Activated B cell treated with CpG ODN at 0.5 μM for 24 hours (primary cell): ENCODE measurements at regions of chr7 and their contacts with region 1.

Region 1: GRCh38 chr7:128739048-128739962 is at the start of gene CALU:
- DNase-seq: peak; percentile 89
- ATAC-seq: peak; percentile 96
- H3K4me3 Mint-ChIP-seq: peak within 1 kb of the TSS; percentile 97
- H3K27ac Mint-ChIP-seq: peak within 1 kb of the TSS; percentile 88
- H3K4me1 Mint-ChIP-seq: peaks cover 30% of the 10 kb centered on the region
- H3K27me3 Mint-ChIP-seq: no peaks in the 10 kb centered on the region
- CTCF ChIP-seq: no peak
- total RNA-seq, gene CALU: 14.7 and 15.4 TPM in 2 replicates

Region 2: GRCh38 chr7:128304212-128304611 is 435.1 kb before region 1 on chr7:
- CTCF ChIA-PET with region 1: no interaction called
- POLR2A ChIA-PET with region 1: no interaction called
- intact Hi-C with region 1: no loop called
- DNase-seq: no peak
- ATAC-seq: no peak
- H3K4me3 Mint-ChIP-seq: no peak overlapping the region
- H3K27ac Mint-ChIP-seq: no peak overlapping the region
- H3K4me1 Mint-ChIP-seq: no peaks in the 10 kb centered on the region
- H3K27me3 Mint-ChIP-seq: no peaks in the 10 kb centered on the region
- CTCF ChIP-seq: no peak

Region 3: GRCh38 chr7:128343554-128344430 is 395.5 kb before region 1 on chr7 and contains the start of gene RBM28:
- CTCF ChIA-PET with region 1: no interaction called
- POLR2A ChIA-PET with region 1: no interaction called
- intact Hi-C with region 1: loop called (anchors 5 kb)
- DNase-seq: peak; percentile 80
- ATAC-seq: peak; percentile 95
- H3K4me3 Mint-ChIP-seq: peak within 1 kb of the TSS; percentile 97
- H3K27ac Mint-ChIP-seq: peak within 1 kb of the TSS; percentile 95
- H3K4me1 Mint-ChIP-seq: peaks cover 26% of the 10 kb centered on the region
- H3K27me3 Mint-ChIP-seq: no peaks in the 10 kb centered on the region
- CTCF ChIP-seq: no peak
- total RNA-seq, gene RBM28: 45.7 and 54.4 TPM in 2 replicates

Region 4: DNA sequence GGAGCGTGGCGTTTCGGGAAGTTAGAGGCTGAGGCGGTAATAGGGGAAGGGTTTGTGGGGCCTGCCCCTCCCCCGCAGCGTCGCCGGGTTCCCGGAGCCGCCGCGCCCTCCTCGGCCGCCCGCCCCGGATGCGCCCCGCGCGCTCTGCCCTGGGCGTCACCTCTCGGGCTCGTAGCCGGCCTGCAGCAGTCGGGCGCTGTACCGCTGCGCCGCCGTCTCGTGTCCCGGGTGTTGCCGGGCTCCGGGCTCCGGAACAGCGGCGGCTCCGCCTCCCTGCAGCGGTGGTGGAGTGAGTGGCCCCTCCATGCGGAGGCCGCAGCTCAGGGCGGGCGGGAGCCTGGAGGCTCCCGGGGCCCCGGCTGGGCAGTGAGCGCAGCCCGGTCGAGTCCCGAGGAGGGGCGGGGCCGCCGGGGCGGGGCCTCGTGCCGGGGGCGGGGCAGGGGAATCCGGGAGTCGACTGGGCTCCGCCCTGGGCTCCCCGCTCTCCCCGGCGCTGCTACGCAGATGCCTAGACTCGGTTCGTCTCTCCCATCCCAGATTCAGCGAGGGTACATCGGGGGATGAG is 329.6 kb before region 1 on chr7 and contains the start of gene IMPDH1:
- CTCF ChIA-PET with region 1: no interaction called
- POLR2A ChIA-PET with region 1: no interaction called
- intact Hi-C with region 1: loop called (anchors 10 kb)
- DNase-seq: peak; percentile 91
- ATAC-seq: peak; percentile 76
- H3K4me3 Mint-ChIP-seq: peak within 1 kb of the TSS; percentile 91
- H3K27ac Mint-ChIP-seq: peak within 1 kb of the TSS; percentile 72
- H3K4me1 Mint-ChIP-seq: peaks cover 40% of the 10 kb centered on the region
- H3K27me3 Mint-ChIP-seq: no peaks in the 10 kb centered on the region
- CTCF ChIP-seq: no peak
- total RNA-seq, gene IMPDH1: 42.3 and 45.8 TPM in 2 replicates

Region 5: GRCh38 chr7:128697302-128697905 is 41.9 kb before region 1 on chr7:
- CTCF ChIA-PET with region 1: no interaction called
- POLR2A ChIA-PET with region 1: no interaction called
- intact Hi-C with region 1: loop called (anchors 2 kb)
- DNase-seq: peak; percentile 48
- ATAC-seq: peak; percentile 82
- H3K4me3 Mint-ChIP-seq: peak overlapping the region; percentile 80
- H3K27ac Mint-ChIP-seq: peak overlapping the region; percentile 41
- H3K4me1 Mint-ChIP-seq: peaks cover 7% of the 10 kb centered on the region
- H3K27me3 Mint-ChIP-seq: peaks cover 51% of the 10 kb centered on the region
- CTCF ChIP-seq: no peak

Region 6: GRCh38 chr7:128791121-128791961 is 52.0 kb after region 1 on chr7:
- CTCF ChIA-PET with region 1: no interaction called
- POLR2A ChIA-PET with region 1: no interaction called
- intact Hi-C with region 1: loop called (anchors 1 kb)
- DNase-seq: peak; percentile 71
- ATAC-seq: peak; percentile 91
- H3K4me3 Mint-ChIP-seq: peak overlapping the region; percentile 87
- H3K27ac Mint-ChIP-seq: no peak overlapping the region
- H3K4me1 Mint-ChIP-seq: peaks cover 10% of the 10 kb centered on the region
- H3K27me3 Mint-ChIP-seq: no peaks in the 10 kb centered on the region
- CTCF ChIP-seq: no peak

Region 7: DNA sequence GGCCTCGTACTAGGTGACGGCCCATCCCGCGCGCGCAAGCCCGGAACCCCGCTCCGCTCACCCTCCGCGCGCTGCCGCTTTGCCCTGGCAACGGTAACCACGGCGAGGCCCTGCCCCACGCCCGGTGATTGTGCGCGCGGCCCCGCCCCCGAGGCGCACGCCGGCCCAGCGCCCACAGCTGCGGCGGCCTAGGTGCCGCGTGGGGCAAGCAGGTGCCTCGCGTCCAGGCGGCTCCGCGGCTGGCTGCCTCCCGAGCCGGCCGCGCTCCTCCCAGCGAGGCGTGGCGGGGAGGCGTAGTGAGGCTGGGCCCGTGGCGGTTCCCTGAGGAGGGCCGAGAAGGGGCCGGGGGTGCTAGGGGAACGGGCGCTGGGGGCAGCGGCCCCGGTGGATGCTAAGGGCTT is 763.1 kb after region 1 on chr7 and contains the start of gene SMKR1:
- CTCF ChIA-PET with region 1: no interaction called
- POLR2A ChIA-PET with region 1: no interaction called
- intact Hi-C with region 1: loop called (anchors 1 kb)
- DNase-seq: peak; percentile 97
- ATAC-seq: peak; percentile 93
- H3K4me3 Mint-ChIP-seq: peak within 1 kb of the TSS; percentile 83
- H3K27ac Mint-ChIP-seq: peak within 1 kb of the TSS; percentile 78
- H3K4me1 Mint-ChIP-seq: peaks cover 30% of the 10 kb centered on the region
- H3K27me3 Mint-ChIP-seq: no peaks in the 10 kb centered on the region
- CTCF ChIP-seq: no peak
- total RNA-seq, gene SMKR1: 2.2 and 2.4 TPM in 2 replicates